ENCODE measurements at regions of chr16 and their contacts with region 1.

Region 1: DNA sequence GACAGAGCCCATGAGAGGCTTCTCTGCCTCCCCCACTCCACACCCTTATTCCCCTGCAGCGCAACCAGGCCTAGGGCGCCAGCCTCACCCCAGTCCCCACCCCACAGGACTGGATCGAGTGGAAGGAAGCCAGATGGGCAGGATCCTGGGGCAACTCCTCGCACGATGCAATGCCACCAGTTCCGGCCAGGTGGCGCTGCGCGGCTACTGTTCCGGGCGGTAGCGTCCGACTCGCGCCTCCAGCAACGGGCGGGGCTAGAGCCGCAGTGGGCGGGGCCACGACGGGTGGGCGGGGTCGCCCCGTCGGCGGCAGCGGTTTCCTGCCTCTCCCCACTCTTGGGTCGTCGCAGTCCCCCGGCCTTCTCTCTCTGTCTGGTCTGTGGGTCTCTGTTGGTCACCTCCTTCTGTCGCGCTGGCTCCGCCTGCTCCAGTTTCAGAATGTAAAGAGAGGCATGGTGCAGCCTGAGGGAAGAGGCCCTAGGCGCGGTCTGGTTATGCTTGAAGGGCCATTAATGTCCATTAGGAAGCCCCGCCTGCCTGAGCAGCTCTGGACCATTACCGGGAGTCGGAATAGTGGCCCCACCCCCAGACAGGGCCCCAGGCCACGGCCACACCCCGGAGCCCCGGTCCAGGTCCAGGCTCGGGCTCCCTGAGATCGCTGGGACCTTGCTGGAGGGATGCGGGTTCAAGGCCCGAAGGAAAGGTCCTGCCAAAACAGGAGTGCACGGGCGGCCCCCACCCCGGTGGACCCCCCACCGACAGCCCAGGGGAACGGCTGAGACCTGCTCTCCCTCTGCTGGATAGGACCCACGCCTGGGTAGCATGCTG is 3.4 kb upstream of the NHERF2 start:
- DNase-seq: no peak
- H3K4me3 ChIP-seq: peak overlapping the region; percentile 18
- H3K27me3 ChIP-seq: peaks cover 6% of the 10 kb centered on the region; the same call in 1 of the 2 replicates
- CTCF ChIP-seq: peak; percentile 89

Region 2: GRCh38 chr16:1871974-1872635 is 151.2 kb before region 1 on chr16 and contains the start of gene MEIOB:
- CTCF ChIA-PET with region 1: no interaction called
- POLR2A ChIA-PET with region 1: interaction called, 22 read pairs
- DNase-seq: no peak
- H3K4me3 ChIP-seq: peak within 1 kb of the TSS; percentile 18
- H3K27me3 ChIP-seq: peaks cover 2% of the 10 kb centered on the region; the same call in 1 of the 2 replicates
- CTCF ChIP-seq: no peak
- polyA plus RNA-seq, gene MEIOB: 0.25 and 0.28 TPM in 2 replicates

Region 3: GRCh38 chr16:1990351-1991134 is 32.8 kb before region 1 on chr16:
- CTCF ChIA-PET with region 1: no interaction called
- POLR2A ChIA-PET with region 1: no interaction called
- DNase-seq: no peak
- H3K4me3 ChIP-seq: peak overlapping the region; percentile 29
- H3K27me3 ChIP-seq: peaks cover 2% of the 10 kb centered on the region; the same call in 1 of the 2 replicates
- CTCF ChIP-seq: no peak

Region 4: GRCh38 chr16:2009789-2010510 is 13.4 kb before region 1 on chr16 and contains the start of gene ZNF598:
- CTCF ChIA-PET with region 1: interaction called, 20 read pairs
- POLR2A ChIA-PET with region 1: no interaction called
- DNase-seq: no peak
- H3K4me3 ChIP-seq: peak within 1 kb of the TSS; percentile 77
- H3K27me3 ChIP-seq: no peaks in the 10 kb centered on the region
- CTCF ChIP-seq: no peak
- polyA plus RNA-seq, gene ZNF598: 14.4 and 23.0 TPM in 2 replicates

Region 5: GRCh38 chr16:2047330-2048115 is 24.2 kb after region 1 on chr16 and contains the starts of genes NTHL1 and TSC2:
- CTCF ChIA-PET with region 1: interaction called, 15 read pairs
- POLR2A ChIA-PET with region 1: no interaction called
- DNase-seq: peak; percentile 80
- H3K4me3 ChIP-seq: peak within 1 kb of the TSS; percentile 92
- H3K27me3 ChIP-seq: no peaks in the 10 kb centered on the region
- CTCF ChIP-seq: peak; percentile 43
- polyA plus RNA-seq, gene NTHL1: 14.6 and 21.0 TPM in 2 replicates
- polyA plus RNA-seq, gene TSC2: 30.5 and 66.3 TPM in 2 replicates

Region 6: DNA sequence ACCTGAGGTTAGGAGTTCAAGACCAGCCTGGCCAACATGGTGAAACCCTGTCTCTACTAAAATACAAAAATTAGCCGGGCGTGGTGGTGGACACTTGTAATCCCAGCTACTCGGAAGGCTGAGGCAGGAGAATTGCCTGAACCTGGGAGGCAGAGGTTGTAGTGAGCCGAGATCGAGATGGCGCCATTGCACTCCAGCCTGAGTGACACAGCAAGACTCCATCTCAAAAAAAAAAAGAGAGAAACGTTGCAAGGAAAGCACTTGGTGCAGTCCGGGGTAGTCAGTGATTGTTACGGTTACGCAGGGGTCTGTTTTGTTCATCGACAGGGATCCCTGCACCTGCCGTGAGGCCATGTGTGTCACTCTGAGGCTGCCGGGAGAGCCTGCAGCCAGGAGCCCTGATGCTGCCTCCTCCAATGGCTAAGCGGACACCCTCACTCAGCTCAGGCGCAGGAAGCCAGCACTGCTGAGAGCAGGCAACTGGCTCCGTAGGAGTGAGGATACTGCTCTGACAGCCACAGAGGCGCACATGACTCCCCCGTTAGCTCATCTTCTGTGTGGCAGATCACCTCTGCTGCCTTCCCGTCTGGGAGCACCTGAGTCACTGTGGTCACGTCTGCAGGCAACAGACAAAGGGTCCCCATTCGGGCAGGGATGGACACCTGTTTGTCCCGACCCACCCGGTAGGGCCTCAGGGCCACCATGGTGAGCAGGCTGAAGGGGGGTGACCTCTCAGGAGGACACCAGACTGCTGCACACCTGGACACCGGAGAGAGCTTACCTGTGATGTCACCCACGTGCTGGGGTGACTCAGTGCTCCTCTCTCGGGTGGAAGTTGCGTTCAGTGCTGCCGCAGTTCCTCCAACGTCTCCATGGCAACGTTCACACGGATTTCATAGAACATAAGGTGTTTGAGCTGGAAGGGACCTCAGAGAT is 119.9 kb after region 1 on chr16:
- CTCF ChIA-PET with region 1: interaction called, 29 read pairs
- POLR2A ChIA-PET with region 1: interaction called, 5 read pairs
- DNase-seq: no peak
- H3K4me3 ChIP-seq: no peak overlapping the region
- H3K27me3 ChIP-seq: no peaks in the 10 kb centered on the region
- CTCF ChIP-seq: no peak

Measured in BJ (cell line).